ENCODE measurements at regions of chr19 and their contacts with region 1.

Region 1: GRCh38 chr19:14136509-14137281 is at the start of gene ASF1B:
- DNase-seq: peak; percentile 96 to 99 (median 97)
- ATAC-seq: peak; percentile 93
- H3K4me3 ChIP-seq: peak within 1 kb of the TSS; percentile 84
- H3K27ac ChIP-seq: peak within 1 kb of the TSS; percentile 94
- H3K4me1 ChIP-seq: peaks cover 12 to 48% of the 10 kb centered on the region in 2 experiments; a peak in 4 of 5 replicates
- H3K27me3 ChIP-seq: no peaks in the 10 kb centered on the region
- CTCF ChIP-seq: peak; percentile 91 to 98 (median 94)
- EP300 ChIP-seq: no peak
- POLR2A ChIP-seq: peak; percentile 95
- RAD21 ChIP-seq: peak; percentile 87 to 95
- polyA plus RNA-seq, gene ASF1B: 6.0 to 8.0 TPM

Region 2: DNA sequence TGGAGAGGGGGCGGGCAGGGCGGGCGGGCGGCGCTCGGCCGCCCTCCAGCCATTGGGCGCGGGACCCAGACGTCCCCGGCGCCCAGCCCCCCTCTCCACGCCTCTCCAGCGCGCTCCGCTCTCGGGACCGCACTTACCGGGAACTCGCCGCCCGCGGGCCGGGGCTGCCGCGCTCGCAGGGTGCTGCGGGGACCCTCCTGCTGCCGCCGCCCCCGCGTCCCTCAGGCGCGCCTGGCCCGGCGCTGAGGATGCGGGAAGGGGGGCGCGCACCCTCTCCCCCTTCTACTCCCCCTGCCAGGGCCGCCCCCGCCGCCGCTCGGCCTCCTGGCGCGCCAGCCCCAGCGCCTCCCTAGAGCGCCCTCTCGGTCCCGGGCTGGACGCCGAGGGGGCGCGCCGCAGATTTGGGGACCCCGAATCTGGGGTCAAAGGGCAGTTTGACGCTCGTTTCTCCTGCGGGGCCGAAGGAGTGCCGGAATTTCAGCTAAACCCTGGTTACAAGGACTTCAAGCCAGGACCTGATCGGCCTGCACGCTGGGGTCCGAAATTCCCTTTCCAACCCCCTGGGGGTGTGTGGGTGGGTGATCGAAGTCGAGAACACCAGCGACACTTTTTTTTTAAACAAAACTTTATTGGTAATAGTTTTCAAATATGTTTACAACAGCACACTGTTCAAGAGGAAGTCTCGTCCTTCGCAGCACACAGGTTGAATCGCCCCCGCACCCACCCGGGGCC is 45.4 kb before region 1 on chr19:
- CTCF ChIA-PET with region 1: no interaction called
- POLR2A ChIA-PET with region 1: interaction called, 5 read pairs
- in situ Hi-C with region 1: no loop called
- intact Hi-C with region 1: loop called (anchors 2 kb)
- DNase-seq: peak; percentile 61 to 92 (median 84)
- ATAC-seq: peak; percentile 81
- H3K4me3 ChIP-seq: peak overlapping the region; percentile 94
- H3K27ac ChIP-seq: peak overlapping the region; percentile 97
- H3K4me1 ChIP-seq: peaks cover 7 to 29% of the 10 kb centered on the region in 2 experiments; a peak in 3 of 5 replicates
- H3K27me3 ChIP-seq: no peaks in the 10 kb centered on the region
- CTCF ChIP-seq: peak; percentile 53 to 72 (median 53)
- EP300 ChIP-seq: peak; percentile 34
- POLR2A ChIP-seq: peak; percentile 67; the same call in 1 of the 2 replicates
- RAD21 ChIP-seq: no peak

Region 3: DNA sequence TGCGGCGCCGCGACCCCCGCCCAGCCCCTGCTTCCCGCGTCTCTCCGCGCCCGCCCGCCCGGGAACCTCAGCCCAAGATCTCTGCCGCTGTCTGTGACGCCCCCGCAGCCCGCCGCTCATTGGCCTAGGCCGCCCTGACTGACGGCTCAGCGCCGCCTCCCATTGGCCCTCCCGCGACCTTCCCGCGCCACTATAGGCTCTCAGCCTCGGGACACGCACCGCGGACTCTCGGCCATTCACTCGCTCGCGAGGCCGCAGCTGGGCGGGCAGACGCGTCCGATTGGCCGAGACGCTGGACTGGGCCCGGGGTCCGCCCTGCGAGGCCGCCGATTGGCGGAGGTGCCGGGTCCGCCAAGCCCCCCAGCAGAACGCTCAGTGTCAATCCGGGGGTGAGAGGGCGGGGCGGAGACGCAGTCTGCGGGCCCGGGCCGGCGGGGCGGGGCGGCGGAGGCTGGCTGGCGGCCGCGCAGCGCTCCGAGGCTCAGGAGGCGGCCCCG is 19.0 kb before region 1 on chr19 and contains the start of gene PRKACA:
- CTCF ChIA-PET with region 1: no interaction called
- POLR2A ChIA-PET with region 1: interaction called, 9 read pairs
- in situ Hi-C with region 1: no loop called
- intact Hi-C with region 1: loop called (anchors 1 kb)
- DNase-seq: peak; percentile 98 to 99 (median 98)
- ATAC-seq: peak; percentile 97
- H3K4me3 ChIP-seq: peak within 1 kb of the TSS; percentile 90
- H3K27ac ChIP-seq: peak within 1 kb of the TSS; percentile 89
- H3K4me1 ChIP-seq: peaks cover 47 to 57% of the 10 kb centered on the region in 2 experiments; a peak in 4 of 5 replicates
- H3K27me3 ChIP-seq: no peaks in the 10 kb centered on the region
- CTCF ChIP-seq: no peak
- EP300 ChIP-seq: no peak
- POLR2A ChIP-seq: no peak
- RAD21 ChIP-seq: no peak
- polyA plus RNA-seq, gene PRKACA: 1.2 to 1.7 TPM

Region 4: DNA sequence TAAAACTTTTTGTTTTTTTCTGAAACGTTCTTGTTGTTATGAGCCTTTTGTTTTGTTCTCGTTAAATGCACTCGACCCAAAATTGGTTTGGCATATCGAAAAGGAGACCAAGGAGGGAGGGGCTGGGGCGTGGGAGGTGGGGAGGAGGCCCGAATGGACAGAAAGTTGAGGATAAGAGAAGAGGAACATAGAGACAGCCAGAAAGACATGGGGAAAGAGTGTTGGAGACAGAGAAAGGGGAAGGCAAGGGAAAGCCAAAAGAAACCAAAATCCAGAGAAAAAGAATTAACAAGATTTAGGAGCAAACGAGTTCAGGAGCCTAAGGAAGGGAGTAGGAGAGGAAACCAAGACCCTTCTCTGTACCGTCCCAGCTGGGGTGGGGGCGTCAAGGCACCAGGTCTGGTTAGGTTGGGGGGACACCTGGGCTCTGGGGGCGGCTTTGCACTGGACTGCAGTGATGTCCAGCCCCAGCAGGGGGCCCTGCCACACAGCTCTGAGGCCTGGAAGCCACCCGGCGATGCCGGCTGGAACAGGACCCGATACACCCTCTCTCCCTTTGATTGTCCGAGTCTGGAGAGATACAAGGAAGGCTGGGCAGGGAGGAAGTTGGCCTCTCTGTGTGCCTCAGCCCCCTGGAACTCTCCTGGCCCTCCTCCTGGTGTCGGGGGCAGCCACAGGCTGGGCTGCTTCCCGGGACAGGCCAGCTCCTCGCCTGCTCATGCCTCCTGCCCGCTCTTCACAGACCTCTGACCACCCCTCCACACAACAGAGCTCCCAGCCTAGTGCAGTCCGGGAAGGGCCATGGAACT is 11.3 kb after region 1 on chr19:
- CTCF ChIA-PET with region 1: no interaction called
- POLR2A ChIA-PET with region 1: interaction called, 13 read pairs
- in situ Hi-C with region 1: no loop called
- intact Hi-C with region 1: no loop called
- DNase-seq: peak; percentile 76 to 83 (median 81)
- ATAC-seq: peak; percentile 95
- H3K4me3 ChIP-seq: no peak overlapping the region
- H3K27ac ChIP-seq: no peak overlapping the region
- H3K4me1 ChIP-seq: peaks cover 12 to 34% of the 10 kb centered on the region in 2 experiments; a peak in 4 of 5 replicates
- H3K27me3 ChIP-seq: no peaks in the 10 kb centered on the region
- CTCF ChIP-seq: peak; percentile 84 to 93 (median 90)
- EP300 ChIP-seq: no peak
- POLR2A ChIP-seq: no peak; the same call in 1 of the 2 replicates
- RAD21 ChIP-seq: peak; percentile 58 to 81

Region 5: DNA sequence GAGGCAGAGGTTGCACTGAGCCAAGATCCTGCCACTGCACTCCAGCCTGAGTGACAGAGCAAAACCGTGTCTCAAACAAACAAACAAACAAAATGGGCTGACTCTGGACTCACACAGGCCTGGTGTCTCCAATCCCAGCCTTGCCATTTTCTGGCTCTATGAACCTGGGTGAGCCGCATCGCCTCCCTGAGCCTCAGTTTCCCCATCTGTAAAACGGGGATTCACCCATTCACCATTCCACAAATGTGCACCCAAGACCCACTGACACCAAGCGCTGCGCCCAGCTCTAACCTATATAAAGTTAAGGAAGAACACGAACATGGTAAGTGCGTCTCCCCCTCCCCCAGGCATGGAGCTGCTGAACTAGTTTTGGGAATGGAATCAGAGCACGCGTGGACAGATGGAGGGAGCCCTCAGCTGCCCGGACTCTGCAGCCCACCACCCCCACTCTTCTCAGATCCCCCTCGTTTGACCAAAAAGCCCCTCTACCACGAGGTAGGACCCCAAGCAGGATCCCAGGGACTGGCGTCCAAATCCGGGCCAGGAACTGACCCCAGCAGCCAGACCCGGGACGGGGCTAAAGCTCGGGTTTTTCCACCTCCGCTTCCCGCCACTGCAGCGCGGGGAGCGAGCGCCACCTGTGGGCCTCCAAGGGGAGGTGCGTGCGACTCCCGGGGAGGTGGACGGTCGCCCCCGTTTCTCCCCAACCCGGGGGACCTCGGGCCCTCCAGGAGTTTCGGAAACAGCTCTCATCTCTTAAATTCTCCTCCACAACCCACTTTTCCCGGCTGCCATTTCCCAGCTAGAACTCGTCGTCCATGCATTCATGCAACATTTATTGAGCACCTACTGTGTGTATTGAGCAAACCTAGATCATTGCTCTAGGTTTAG is 211.5 kb after region 1 on chr19:
- CTCF ChIA-PET with region 1: no interaction called
- POLR2A ChIA-PET with region 1: interaction called, 3 read pairs
- in situ Hi-C with region 1: no loop called
- intact Hi-C with region 1: loop called (anchors 5 kb)
- DNase-seq: peak; percentile 80 to 91 (median 89)
- ATAC-seq: peak; percentile 92
- H3K4me3 ChIP-seq: peak overlapping the region; percentile 35
- H3K27ac ChIP-seq: no peak overlapping the region; the same call in 2 of the 3 replicates
- H3K4me1 ChIP-seq: peaks cover 3 to 14% of the 10 kb centered on the region in 2 experiments; a peak in 3 of 5 replicates
- H3K27me3 ChIP-seq: peaks cover 0 to 13% of the 10 kb centered on the region in 2 experiments; a peak in 2 of 5 replicates
- CTCF ChIP-seq: peak; percentile 93 to 96 (median 93)
- EP300 ChIP-seq: no peak
- POLR2A ChIP-seq: no peak
- RAD21 ChIP-seq: peak; percentile 93 to 96

Region 6: DNA sequence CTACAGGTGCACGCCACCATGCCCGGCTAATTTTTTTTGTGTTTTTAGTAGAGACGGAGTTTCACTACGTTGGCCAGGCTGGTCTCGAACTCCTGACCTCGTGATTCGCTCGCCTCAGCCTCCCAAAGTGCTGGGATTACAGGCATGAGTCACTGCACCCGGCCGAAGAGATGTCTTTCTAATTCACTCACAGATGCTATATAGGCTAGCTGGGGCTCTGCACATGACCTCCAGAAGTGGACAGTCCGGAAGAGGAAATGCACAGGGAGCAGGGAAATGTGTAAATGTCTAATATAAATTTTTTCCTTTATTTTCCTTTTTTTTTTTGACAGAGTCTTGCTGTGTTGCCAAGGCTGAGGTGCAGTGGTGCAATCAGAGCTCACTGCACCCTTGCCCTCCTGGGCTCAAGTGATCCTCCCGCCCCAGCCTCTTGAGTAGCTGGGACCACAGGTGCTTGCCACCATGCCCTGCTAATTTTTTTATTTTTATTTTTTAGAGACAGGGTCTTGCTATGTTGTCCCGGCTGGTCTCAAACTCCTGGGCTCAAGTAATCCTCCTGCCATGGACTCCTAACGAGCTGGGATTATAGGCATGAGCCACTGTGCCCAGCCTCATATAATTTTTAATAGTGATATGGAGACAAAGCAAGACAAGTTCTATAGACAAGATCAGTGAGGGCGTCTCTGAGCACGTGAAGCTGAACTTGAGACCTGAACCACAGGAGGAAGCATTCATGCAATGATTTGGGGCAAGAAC is 350.9 kb after region 1 on chr19:
- CTCF ChIA-PET with region 1: interaction called, 5 read pairs
- POLR2A ChIA-PET with region 1: no interaction called
- in situ Hi-C with region 1: no loop called
- intact Hi-C with region 1: loop called (anchors 5 kb)
- DNase-seq: no peak
- ATAC-seq: no peak
- H3K4me3 ChIP-seq: no peak overlapping the region
- H3K27ac ChIP-seq: no peak overlapping the region
- H3K4me1 ChIP-seq: peaks cover under 1 to 2% of the 10 kb centered on the region in 2 experiments; a peak in 3 of 5 replicates
- H3K27me3 ChIP-seq: no peaks in the 10 kb centered on the region
- CTCF ChIP-seq: no peak
- EP300 ChIP-seq: no peak
- POLR2A ChIP-seq: no peak
- RAD21 ChIP-seq: no peak